ENCODE measurements at regions of chr12 and their contacts with region 1.

Region 1: DNA sequence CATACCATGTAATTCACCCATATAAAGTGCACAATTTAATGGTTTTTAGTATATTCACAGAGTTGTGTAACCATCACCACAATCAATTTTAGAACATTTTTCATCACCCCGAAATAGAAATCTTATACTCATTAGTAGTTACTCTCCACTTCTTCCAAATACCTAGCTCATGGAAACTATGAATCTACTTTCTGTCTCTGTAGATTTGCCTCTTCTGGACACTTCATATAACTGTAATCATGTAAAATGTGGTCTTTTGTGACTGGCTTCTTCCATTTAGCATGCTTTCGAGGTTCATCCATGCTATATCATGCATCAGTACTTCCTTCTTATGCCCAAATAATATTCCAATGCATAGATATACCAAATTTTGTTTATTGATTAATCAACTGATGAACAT is 10.8 kb downstream of the DNAI7 start:
- DNase-seq: no peak
- H3K4me3 Mint-ChIP-seq: no peak overlapping the region
- H3K27ac Mint-ChIP-seq: no peak overlapping the region
- H3K4me1 Mint-ChIP-seq: peaks cover 11% of the 10 kb centered on the region
- H3K27me3 Mint-ChIP-seq: no peaks in the 10 kb centered on the region
- CTCF ChIP-seq: no peak

Region 2: DNA sequence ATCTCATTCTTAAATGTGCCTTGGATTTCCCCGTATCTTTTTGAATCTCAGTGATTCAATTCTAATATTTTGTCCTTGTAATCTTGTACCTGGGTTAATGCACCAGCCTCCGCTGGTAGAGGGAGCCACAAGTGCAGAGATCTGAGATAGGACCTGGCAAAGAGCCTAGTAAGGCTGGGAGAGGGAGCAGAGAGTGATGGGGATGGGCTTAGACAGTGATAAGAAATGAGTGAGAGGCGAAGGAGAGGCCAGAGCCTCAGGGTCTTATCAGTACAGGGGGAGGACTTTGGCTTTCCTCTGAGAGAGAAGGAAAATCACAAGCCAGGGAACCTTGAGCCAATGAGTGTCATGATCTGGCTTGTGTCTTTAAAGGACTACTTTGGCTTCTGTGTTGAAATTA is 399.4 kb after region 1 on chr12:
- CTCF ChIA-PET with region 1: no interaction called
- intact Hi-C with region 1: no loop called
- DNase-seq: peak; percentile 9
- H3K4me3 Mint-ChIP-seq: no peak overlapping the region
- H3K27ac Mint-ChIP-seq: no peak overlapping the region
- H3K4me1 Mint-ChIP-seq: no peaks in the 10 kb centered on the region
- H3K27me3 Mint-ChIP-seq: peaks cover 9% of the 10 kb centered on the region
- CTCF ChIP-seq: no peak

Region 3: GRCh38 chr12:25757037-25757665 is 573.0 kb after region 1 on chr12:
- CTCF ChIA-PET with region 1: no interaction called
- intact Hi-C with region 1: loop called (anchors 10 kb)
- DNase-seq: no peak
- H3K4me3 Mint-ChIP-seq: no peak overlapping the region
- H3K27ac Mint-ChIP-seq: no peak overlapping the region
- H3K4me1 Mint-ChIP-seq: peaks cover 11% of the 10 kb centered on the region
- H3K27me3 Mint-ChIP-seq: no peaks in the 10 kb centered on the region
- CTCF ChIP-seq: no peak

Measured in Calu3 (cell line).